Colonic mucosa (tissue), 4 donors: ENCODE measurements at regions of chr12 and their contacts with region 1.

Region 1: DNA sequence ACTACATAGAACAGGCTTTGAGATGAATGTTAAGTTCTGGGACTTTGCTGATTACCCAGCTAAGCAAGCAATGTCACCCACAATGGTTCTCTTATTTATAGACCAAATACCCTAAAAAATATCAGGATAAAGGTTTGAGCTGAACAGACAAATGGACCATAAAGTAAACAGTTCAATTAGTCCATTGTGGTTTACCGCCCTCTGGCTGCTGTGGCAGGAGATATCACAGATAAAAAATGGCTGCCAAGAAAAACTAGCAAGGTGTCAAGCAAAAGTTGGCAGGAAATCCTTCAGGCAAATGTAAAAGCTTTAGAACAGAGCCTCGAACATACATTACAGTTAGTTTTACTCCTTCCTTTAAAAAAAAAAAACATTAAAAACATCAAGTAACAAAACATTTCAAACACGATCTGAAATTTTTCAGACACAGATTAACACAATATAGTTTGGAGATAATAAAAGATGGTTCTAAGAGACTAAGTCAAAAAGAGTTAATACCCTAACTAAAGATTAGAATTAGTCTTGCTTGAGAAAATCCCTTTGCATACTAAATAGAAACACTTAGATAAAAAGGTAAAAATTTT is 41.3 kb downstream of the MED13L start:
- DNase-seq: peak; percentile 42
- H3K4me3 ChIP-seq: no peak overlapping the region
- H3K27ac ChIP-seq: no peak overlapping the region
- H3K4me1 ChIP-seq: no peaks in the 10 kb centered on the region
- H3K27me3 ChIP-seq: no peaks in the 10 kb centered on the region
- CTCF ChIP-seq: peak; percentile 50

Region 2: GRCh38 chr12:116015525-116015924 is 220.7 kb before region 1 on chr12:
- intact Hi-C with region 1: loop called (anchors 10 kb)
- DNase-seq: no peak
- H3K4me3 ChIP-seq: no peak overlapping the region
- H3K27ac ChIP-seq: no peak overlapping the region
- H3K4me1 ChIP-seq: no peaks in the 10 kb centered on the region
- H3K27me3 ChIP-seq: no peaks in the 10 kb centered on the region
- CTCF ChIP-seq: peak; percentile 29

Region 3: GRCh38 chr12:116277393-116278278 is 41.4 kb after region 1 on chr12 and contains the start of gene MED13L:
- intact Hi-C with region 1: no loop called
- DNase-seq: peak; percentile 84
- H3K4me3 ChIP-seq: peak within 1 kb of the TSS; percentile 60
- H3K27ac ChIP-seq: peak within 1 kb of the TSS; percentile 87
- H3K4me1 ChIP-seq: peaks cover 6% of the 10 kb centered on the region
- H3K27me3 ChIP-seq: no peaks in the 10 kb centered on the region
- CTCF ChIP-seq: no peak
- total RNA-seq, gene MED13L: 73.8 to 92.6 TPM